A673 (cell line): ENCODE measurements at regions of chr13 and their contacts with region 1.

Region 1: DNA sequence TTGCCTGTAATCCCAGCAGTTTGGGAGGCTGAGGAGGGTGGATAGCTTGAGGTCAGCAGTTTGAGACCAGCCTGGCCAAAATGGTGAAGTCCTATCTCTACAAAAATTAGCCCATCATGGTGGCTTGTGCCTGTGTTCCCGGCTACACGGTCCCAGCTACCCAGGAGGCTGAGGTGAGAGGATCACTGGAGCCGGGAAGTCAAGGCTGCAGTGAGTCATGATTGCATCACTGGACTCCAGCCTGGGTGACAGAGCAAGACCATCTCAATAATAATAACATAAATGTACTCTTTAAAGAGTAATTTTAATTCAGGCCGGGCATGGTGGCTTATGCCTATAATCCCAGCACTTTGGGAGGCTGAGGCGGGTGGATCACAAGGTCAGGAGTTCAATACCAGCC is 38.7 kb downstream of the SKA3 start:
- DNase-seq: no peak
- H3K4me3 ChIP-seq: no peak overlapping the region
- H3K27ac ChIP-seq: no peak overlapping the region
- H3K4me1 ChIP-seq: peaks cover 4% of the 10 kb centered on the region
- H3K27me3 ChIP-seq: no peaks in the 10 kb centered on the region
- CTCF ChIP-seq: no peak

Region 2: GRCh38 chr13:20566898-20567874 is 570.5 kb before region 1 on chr13 and contains the start of gene IFT88:
- CTCF ChIA-PET with region 1: no interaction called
- POLR2A ChIA-PET with region 1: no interaction called
- intact Hi-C with region 1: no loop called
- DNase-seq: peak; percentile 96
- H3K4me3 ChIP-seq: peak within 1 kb of the TSS; percentile 57
- H3K27ac ChIP-seq: peak within 1 kb of the TSS; percentile 83
- H3K4me1 ChIP-seq: peaks cover 8% of the 10 kb centered on the region
- H3K27me3 ChIP-seq: no peaks in the 10 kb centered on the region
- CTCF ChIP-seq: no peak
- total RNA-seq, gene IFT88: 19.4 and 23.2 TPM in 2 replicates

Region 3: DNA sequence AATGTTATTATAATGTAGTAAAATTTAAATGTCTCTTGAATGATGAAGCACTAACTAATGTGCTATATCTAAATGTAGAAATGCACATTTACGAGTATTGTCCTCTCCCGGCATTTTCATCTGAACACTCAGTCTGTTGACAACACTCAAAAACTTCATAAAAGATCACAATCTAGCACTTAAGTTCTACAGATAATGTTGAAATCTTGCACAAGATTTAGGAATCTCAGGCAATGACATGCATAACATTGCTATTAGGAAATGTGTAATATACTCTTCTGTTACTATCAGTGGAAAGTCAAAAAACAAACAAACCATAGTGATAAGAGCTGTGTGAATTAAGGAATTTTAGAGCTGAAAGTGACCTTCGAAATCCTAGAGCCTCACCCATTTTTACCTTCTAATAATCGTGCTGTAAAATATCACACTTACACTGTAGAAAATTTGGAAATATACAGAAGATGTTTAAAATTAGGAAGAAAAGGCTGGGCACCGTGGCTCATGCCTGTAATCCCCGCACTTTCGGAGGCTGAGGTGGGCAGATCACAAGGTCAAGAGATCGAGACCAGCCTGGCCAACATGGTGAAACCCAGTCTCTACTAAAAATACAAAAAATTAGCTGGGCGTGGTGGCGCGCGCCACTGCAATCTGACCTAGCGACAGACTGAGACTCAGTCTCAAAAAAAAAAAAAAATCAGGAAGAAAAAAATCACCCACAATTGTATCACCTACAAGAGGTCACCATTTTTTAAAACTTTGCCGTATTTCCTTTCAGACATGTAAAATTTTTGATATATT is 197.4 kb before region 1 on chr13:
- CTCF ChIA-PET with region 1: interaction called, 7 read pairs
- POLR2A ChIA-PET with region 1: no interaction called
- intact Hi-C with region 1: loop called (anchors 1 kb)
- DNase-seq: no peak
- H3K4me3 ChIP-seq: no peak overlapping the region
- H3K27ac ChIP-seq: no peak overlapping the region
- H3K4me1 ChIP-seq: peaks cover 6% of the 10 kb centered on the region
- H3K27me3 ChIP-seq: no peaks in the 10 kb centered on the region
- CTCF ChIP-seq: no peak